ENCODE measurements at regions of chr5 and their contacts with region 1.

Region 1: DNA sequence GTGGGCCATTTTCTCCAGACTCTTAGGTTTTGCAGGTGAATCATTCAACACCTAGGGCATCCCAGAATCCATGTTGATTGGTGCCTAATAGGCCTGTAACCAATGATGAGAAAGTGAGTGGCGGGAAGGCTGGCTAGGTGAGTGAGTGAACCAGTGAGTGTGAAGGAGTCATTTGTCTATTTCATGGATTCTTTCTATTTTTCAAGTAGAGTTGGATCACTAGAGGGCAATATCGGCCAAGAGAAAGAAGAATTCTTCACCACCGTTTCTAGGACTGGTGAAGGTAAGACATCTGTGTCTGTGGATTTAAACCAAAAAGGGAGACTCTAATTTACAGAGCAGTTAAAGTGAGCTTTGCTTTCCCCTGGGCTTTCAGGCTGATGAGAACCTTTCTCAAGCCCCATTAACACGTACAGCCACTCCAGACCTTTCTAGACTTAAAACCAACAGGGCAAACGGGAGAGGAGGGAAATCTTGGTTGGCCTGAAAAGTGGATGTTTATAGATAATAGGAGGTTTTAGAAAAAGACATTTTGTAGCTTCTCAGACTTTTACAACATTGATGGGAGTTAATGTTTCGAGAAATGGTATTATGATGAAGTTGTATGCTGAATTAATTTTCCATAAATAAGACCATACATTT is 114.3 kb upstream of the IL12B start:
- DNase-seq: no peak
- ATAC-seq: peak in 1 of 8 donors; percentile 32
- H3K4me3 ChIP-seq: no peak overlapping the region
- H3K27ac ChIP-seq: no peak overlapping the region
- H3K4me1 ChIP-seq: peaks cover 0 to 24% (median 0%) of the 10 kb centered on the region in 9 donors
- H3K27me3 ChIP-seq: no peaks in the 10 kb centered on the region
- CTCF ChIP-seq: peak in 7 of 9 donors; percentile 21 to 64 (median 49)

Region 2: DNA sequence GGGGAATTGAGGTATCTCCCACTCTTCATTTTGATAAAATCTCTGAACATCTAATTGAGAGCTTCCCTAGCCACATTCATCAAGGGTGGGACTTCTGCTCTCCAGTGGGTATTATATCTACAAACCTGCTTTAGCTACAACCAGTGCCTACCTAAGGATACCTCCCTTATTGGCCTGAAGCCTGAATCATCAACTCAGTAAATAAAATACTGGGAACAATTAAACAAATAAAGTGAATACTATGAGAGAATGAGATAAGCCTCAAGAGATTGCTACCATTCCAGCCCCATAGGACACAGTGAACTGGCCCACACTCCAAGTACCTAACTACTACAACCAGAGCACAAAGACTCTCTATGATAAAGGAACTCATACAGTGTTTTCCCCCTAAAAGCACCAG is 66.9 kb before region 1 on chr5:
- intact Hi-C with region 1: no loop called
- DNase-seq: no peak
- ATAC-seq: no peak
- H3K4me3 ChIP-seq: no peak overlapping the region
- H3K27ac ChIP-seq: no peak overlapping the region
- H3K4me1 ChIP-seq: no peaks in the 10 kb centered on the region
- H3K27me3 ChIP-seq: no peaks in the 10 kb centered on the region
- CTCF ChIP-seq: no peak

Region 3: DNA sequence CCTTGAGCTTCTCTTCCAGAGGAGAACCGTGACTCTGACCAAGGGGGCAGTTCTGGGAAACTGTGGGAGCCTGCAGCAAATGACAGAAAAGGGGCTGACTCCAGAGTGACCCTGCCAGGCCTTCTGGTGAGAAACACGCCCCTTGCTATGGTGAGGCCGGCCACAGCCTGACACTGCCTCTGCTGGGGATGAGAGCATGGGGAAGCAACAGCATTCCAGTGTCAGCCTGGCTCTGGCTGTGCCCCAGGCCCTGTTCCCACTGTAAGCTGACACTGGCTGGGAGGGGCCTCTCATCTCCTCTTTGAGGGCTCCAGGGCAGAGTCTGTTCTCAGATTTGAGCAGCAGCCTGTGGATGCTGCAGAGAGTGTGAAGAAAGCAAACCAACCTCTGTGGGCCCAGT is 65.7 kb after region 1 on chr5:
- intact Hi-C with region 1: loop called in 1 of 10 experiments (anchors 2 kb)
- DNase-seq: peak; percentile 71 to 83
- ATAC-seq: peak; percentile 90 to 98 (median 94)
- H3K4me3 ChIP-seq: no peak overlapping the region
- H3K27ac ChIP-seq: peak overlapping the region; percentile 56 to 86 (median 80)
- H3K4me1 ChIP-seq: peaks cover 0 to 52% (median 21%) of the 10 kb centered on the region in 9 donors
- H3K27me3 ChIP-seq: no peaks in the 10 kb centered on the region
- CTCF ChIP-seq: peak in 2 of 9 donors; percentile 22 to 33

Region 4: DNA sequence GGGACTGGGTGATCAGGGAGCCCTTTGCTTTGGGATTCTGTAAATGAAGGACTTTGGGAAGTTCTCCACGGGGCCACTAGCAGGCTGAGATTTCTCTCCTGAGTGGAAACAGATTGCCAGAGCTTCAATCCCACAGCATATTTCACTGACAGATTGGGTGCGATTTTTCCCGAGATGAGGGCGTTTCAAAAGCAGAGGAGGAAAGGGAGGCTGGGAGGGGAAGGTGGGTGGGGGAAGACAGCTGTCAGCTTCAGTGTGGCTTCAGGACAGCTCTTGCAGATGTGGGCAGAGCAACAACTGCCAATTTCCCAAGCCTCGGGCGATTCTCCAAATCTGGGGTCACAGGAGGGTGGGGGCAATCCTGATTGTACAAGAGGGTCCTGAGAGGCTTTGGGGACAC is 213.2 kb after region 1 on chr5:
- intact Hi-C with region 1: loop called in 1 of 10 experiments (anchors 10 kb)
- DNase-seq: no peak
- ATAC-seq: peak in 1 of 8 donors; percentile 24
- H3K4me3 ChIP-seq: no peak overlapping the region
- H3K27ac ChIP-seq: no peak overlapping the region
- H3K4me1 ChIP-seq: peaks cover 0 to 25% (median 4%) of the 10 kb centered on the region in 9 donors
- H3K27me3 ChIP-seq: no peaks in the 10 kb centered on the region
- CTCF ChIP-seq: no peak

Region 5: GRCh38 chr5:159764283-159765134 is 319.9 kb after region 1 on chr5:
- intact Hi-C with region 1: loop called in 1 of 10 experiments (anchors 10 kb)
- DNase-seq: peak in 1 of 2 donors; percentile 37
- ATAC-seq: peak; percentile 40 to 87 (median 70)
- H3K4me3 ChIP-seq: no peak overlapping the region
- H3K27ac ChIP-seq: peak overlapping the region in 6 of 10 donors; percentile 1 to 76 (median 38)
- H3K4me1 ChIP-seq: peaks cover 0 to 22% (median 12%) of the 10 kb centered on the region in 9 donors
- H3K27me3 ChIP-seq: no peaks in the 10 kb centered on the region
- CTCF ChIP-seq: no peak

Region 6: GRCh38 chr5:159773062-159773924 is 328.7 kb after region 1 on chr5:
- intact Hi-C with region 1: loop called in 3 of 10 experiments (anchors 10 kb)
- DNase-seq: peak; percentile 77 to 78
- ATAC-seq: peak; percentile 93 to 98 (median 96)
- H3K4me3 ChIP-seq: peak overlapping the region in 9 of 10 donors; percentile 7 to 48 (median 43)
- H3K27ac ChIP-seq: peak overlapping the region in 9 of 10 donors; percentile 51 to 86 (median 83)
- H3K4me1 ChIP-seq: peaks cover 0 to 13% (median 0%) of the 10 kb centered on the region in 9 donors
- H3K27me3 ChIP-seq: peaks cover 0 to 28% (median 0%) of the 10 kb centered on the region in 7 donors
- CTCF ChIP-seq: peak in 6 of 9 donors; percentile 19 to 58 (median 42)

Region 7: DNA sequence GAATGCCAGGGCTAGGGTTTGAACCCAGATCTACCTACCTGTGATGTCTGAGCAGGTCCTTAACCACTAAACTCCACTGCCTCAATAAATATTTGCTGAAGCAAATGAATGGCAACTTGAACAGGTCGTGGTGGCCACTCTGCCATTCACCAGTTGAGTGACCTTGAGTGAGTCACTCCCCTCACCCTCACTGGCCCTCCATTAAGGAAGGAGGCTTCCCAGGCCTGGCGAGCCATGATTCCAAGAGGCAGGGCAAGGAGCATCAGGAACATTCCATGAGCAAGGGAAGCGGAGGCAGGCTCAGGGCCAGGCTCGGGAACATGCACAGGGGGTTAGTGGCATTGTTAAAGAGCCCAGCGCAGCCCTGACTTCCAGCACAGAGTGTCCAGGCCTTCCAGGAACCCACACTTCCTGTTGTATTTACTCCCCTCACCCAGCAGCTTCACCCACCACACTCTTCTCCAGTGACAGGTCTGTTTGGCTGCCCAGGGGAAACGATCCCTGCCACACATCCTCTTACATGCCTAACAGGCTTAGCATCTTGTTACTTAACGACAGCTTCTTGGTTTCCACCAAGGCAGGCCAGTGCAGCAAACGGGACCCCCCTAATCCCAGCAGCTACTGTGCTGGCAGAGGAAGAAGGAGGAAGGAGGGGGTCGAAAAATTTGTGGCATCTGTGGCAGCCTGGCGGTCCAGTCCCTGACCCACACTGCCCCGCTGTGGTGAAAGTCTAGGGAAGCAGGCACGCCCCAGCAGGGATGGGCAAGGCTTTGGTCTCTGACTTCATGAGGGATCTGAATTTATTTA is 520.7 kb after region 1 on chr5:
- intact Hi-C with region 1: loop called in 1 of 10 experiments (anchors 5 kb)
- DNase-seq: peak; percentile 39 to 52
- ATAC-seq: peak in 7 of 8 donors; percentile 60 to 86 (median 74)
- H3K4me3 ChIP-seq: no peak overlapping the region
- H3K27ac ChIP-seq: no peak overlapping the region
- H3K4me1 ChIP-seq: peaks cover 0 to 3% (median 0%) of the 10 kb centered on the region in 9 donors
- H3K27me3 ChIP-seq: peaks cover 0 to 39% (median 5%) of the 10 kb centered on the region in 7 donors
- CTCF ChIP-seq: peak; percentile 16 to 77 (median 68)

Region 8: DNA sequence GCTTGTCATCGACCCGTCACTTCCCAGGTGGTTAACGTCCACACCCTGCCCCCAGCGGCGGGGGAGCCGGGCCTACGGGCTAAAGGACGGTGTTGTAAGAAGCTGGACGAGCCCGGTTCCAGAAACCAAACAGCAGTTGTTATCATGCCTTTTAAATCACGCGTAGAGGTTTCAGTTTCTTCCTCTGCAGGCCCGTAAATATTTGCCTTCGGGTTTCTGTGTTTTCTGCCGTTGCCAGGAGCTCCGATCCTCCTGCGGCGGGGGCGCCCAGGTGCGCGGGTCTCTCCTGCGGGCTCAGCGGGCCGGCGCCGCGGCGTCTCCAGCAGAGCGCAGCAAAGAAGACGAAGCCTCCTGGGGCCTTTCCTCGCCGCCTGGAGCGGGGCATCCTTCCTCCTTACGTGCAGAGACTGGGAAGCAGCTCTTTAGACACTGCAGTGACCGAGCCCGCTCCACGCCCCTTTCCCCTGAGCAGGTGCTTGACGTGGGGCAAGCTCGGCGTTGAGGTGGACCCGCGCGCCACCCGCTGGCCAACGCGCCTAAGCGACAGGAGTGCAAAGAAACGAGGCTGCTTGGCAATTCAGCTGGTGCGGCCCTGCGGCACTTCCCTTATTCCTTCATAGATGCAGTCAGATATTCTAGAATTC is 542.6 kb after region 1 on chr5:
- intact Hi-C with region 1: loop called (anchors 1 to 10 kb)
- DNase-seq: peak; percentile 66 to 74
- ATAC-seq: peak; percentile 86 to 96 (median 92)
- H3K4me3 ChIP-seq: peak overlapping the region; percentile 17 to 54 (median 48)
- H3K27ac ChIP-seq: no peak overlapping the region
- H3K4me1 ChIP-seq: peaks cover 0 to 10% (median 0%) of the 10 kb centered on the region in 9 donors
- H3K27me3 ChIP-seq: peaks cover 0 to 46% (median 22%) of the 10 kb centered on the region in 7 donors
- CTCF ChIP-seq: peak; percentile 47 to 84 (median 70)

Measured in heart right ventricle (tissue), 16 donors.